CD8-positive, alpha-beta T cell (primary cell): ENCODE measurements at regions of chr4 and their contacts with region 1.

Region 1: GRCh38 chr4:119286377-119287002 is 35.4 kb downstream of the FABP2 start:
- DNase-seq: peak in 5 of 9 experiments; percentile 21 to 69 (median 34)
- ATAC-seq: peak; percentile 55
- H3K4me3 ChIP-seq: no peak overlapping the region
- H3K4me3 Mint-ChIP-seq: no peak overlapping the region
- H3K27ac ChIP-seq: no peak overlapping the region
- H3K27ac Mint-ChIP-seq: no peak overlapping the region
- H3K4me1 ChIP-seq: peaks cover 3% of the 10 kb centered on the region
- H3K4me1 Mint-ChIP-seq: peaks cover 30% of the 10 kb centered on the region
- H3K27me3 ChIP-seq: no peaks in the 10 kb centered on the region
- H3K27me3 Mint-ChIP-seq: no peaks in the 10 kb centered on the region
- CTCF ChIP-seq: peak; percentile 81

Region 2: GRCh38 chr4:118684873-118685811 is 601.3 kb before region 1 on chr4 and contains the start of gene METTL14:
- CTCF ChIA-PET with region 1: no interaction called
- POLR2A ChIA-PET with region 1: no interaction called
- intact Hi-C with region 1: loop called in 1 of 2 experiments (anchors 5 kb)
- DNase-seq: peak; percentile 71 to 92 (median 85)
- ATAC-seq: peak; percentile 91
- H3K4me3 ChIP-seq: peak within 1 kb of the TSS; percentile 86 to 88
- H3K4me3 Mint-ChIP-seq: peak within 1 kb of the TSS; percentile 92
- H3K27ac ChIP-seq: peak within 1 kb of the TSS; percentile 84 to 94
- H3K27ac Mint-ChIP-seq: peak within 1 kb of the TSS; percentile 98
- H3K4me1 ChIP-seq: peaks cover 15% of the 10 kb centered on the region
- H3K4me1 Mint-ChIP-seq: peaks cover 35% of the 10 kb centered on the region
- H3K27me3 ChIP-seq: no peaks in the 10 kb centered on the region
- H3K27me3 Mint-ChIP-seq: no peaks in the 10 kb centered on the region
- CTCF ChIP-seq: no peak
- total RNA-seq, gene METTL14: 68.8 to 70.2 TPM

Region 3: DNA sequence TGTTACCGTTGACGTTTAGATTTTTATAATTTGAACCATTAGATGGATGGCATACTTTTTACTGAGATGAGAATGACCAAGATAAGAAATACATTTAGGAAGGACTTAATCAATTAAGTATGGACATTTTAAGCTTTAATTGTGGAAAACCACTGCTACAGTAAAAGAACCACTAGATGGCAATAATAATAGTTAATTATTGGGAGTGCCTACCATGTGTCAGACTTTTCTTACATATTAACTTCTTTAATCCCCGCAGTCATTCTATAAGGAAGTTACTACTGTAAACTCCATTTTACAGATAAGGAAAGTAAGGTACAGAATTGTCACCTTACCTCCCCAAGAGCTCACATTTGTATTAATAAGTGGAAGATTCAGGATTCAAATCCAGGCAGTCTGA is 199.4 kb before region 1 on chr4:
- CTCF ChIA-PET with region 1: no interaction called
- POLR2A ChIA-PET with region 1: no interaction called
- intact Hi-C with region 1: loop called in 1 of 2 experiments (anchors 1 kb)
- DNase-seq: no peak
- ATAC-seq: no peak
- H3K4me3 ChIP-seq: no peak overlapping the region
- H3K4me3 Mint-ChIP-seq: no peak overlapping the region
- H3K27ac ChIP-seq: no peak overlapping the region
- H3K27ac Mint-ChIP-seq: no peak overlapping the region
- H3K4me1 ChIP-seq: no peaks in the 10 kb centered on the region
- H3K4me1 Mint-ChIP-seq: no peaks in the 10 kb centered on the region
- H3K27me3 ChIP-seq: no peaks in the 10 kb centered on the region
- H3K27me3 Mint-ChIP-seq: no peaks in the 10 kb centered on the region
- CTCF ChIP-seq: no peak

Region 4: DNA sequence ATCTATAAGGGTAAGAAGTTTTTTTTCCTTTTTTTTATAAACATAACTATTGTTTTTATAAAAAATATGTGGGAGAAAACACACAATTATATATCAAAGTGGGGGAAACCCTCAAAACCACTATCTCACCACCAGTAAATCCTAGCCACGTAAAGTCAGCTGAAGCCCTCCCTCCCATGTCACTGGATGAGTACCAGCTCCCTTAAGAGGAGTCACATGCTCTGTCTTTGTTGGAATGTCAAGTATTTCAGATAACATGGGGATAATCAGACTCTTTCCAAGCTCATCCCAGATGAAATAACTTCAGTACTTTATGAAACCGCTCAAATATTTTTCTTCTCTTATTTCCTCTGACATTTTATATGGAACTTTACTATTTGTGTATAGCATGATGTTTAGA is 148.4 kb before region 1 on chr4:
- CTCF ChIA-PET with region 1: no interaction called
- POLR2A ChIA-PET with region 1: no interaction called
- intact Hi-C with region 1: loop called in 1 of 2 experiments (anchors 5 kb)
- DNase-seq: peak in 2 of 9 experiments; percentile 8 to 29
- ATAC-seq: no peak
- H3K4me3 ChIP-seq: no peak overlapping the region
- H3K4me3 Mint-ChIP-seq: no peak overlapping the region
- H3K27ac ChIP-seq: no peak overlapping the region
- H3K27ac Mint-ChIP-seq: peak overlapping the region; percentile 14
- H3K4me1 ChIP-seq: peaks cover 35% of the 10 kb centered on the region
- H3K4me1 Mint-ChIP-seq: peaks cover 45% of the 10 kb centered on the region
- H3K27me3 ChIP-seq: no peaks in the 10 kb centered on the region
- H3K27me3 Mint-ChIP-seq: no peaks in the 10 kb centered on the region
- CTCF ChIP-seq: no peak